Activated CD8-positive, alpha-beta T cell treated with anti-CD3 and anti-CD28 coated beads, Interleukin-2, amount 10 ng/mL, durations not matched to agents 7 days and 5 days (primary cell): ENCODE measurements at regions of chr20 and their contacts with region 1.

Region 1: DNA sequence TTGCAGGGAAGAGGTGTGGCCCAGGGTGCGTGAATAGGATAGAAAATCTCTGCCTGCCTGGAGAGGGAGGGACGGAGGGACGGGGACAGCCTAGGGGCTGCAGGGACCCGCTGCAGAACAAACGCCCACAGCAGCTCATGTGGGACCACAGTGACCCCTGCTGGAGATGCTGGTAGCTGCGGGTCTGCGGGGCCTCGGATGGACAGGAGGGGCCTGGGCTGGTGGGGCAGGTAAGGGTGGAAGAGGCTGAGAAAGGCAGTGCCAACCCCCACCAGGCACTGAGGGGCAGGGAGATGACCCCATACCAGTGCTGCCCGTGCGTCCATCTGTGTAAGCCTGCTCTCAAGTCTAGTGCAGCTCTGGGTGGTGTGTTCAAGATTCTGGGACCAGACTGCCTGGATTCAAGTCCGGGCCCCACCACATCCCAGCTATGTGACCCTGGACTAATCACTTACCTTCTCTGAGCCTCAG is 39.4 kb downstream of the KIAA1755 start:
- DNase-seq: peak; percentile 77
- ATAC-seq: peak; percentile 78
- H3K4me3 Mint-ChIP-seq: no peak overlapping the region
- H3K27ac Mint-ChIP-seq: no peak overlapping the region
- H3K4me1 Mint-ChIP-seq: peaks cover 3% of the 10 kb centered on the region
- H3K27me3 Mint-ChIP-seq: no peaks in the 10 kb centered on the region

Region 2: GRCh38 chr20:37986044-37986858 is 234.9 kb before region 1 on chr20:
- CTCF ChIA-PET with region 1: no interaction called
- POLR2A ChIA-PET with region 1: no interaction called
- DNase-seq: no peak
- ATAC-seq: no peak
- H3K4me3 Mint-ChIP-seq: no peak overlapping the region
- H3K27ac Mint-ChIP-seq: no peak overlapping the region
- H3K4me1 Mint-ChIP-seq: peaks cover 23% of the 10 kb centered on the region
- H3K27me3 Mint-ChIP-seq: no peaks in the 10 kb centered on the region

Region 3: GRCh38 chr20:38049800-38050199 is 171.4 kb before region 1 on chr20:
- CTCF ChIA-PET with region 1: interaction called, 14 read pairs
- POLR2A ChIA-PET with region 1: no interaction called
- DNase-seq: no peak
- ATAC-seq: no peak
- H3K4me3 Mint-ChIP-seq: no peak overlapping the region
- H3K27ac Mint-ChIP-seq: no peak overlapping the region
- H3K4me1 Mint-ChIP-seq: peaks cover 12% of the 10 kb centered on the region
- H3K27me3 Mint-ChIP-seq: no peaks in the 10 kb centered on the region

Region 4: GRCh38 chr20:38073307-38074071 is 147.7 kb before region 1 on chr20:
- CTCF ChIA-PET with region 1: interaction called, 69 read pairs
- POLR2A ChIA-PET with region 1: no interaction called
- DNase-seq: peak; percentile 43
- ATAC-seq: peak; percentile 70
- H3K4me3 Mint-ChIP-seq: no peak overlapping the region
- H3K27ac Mint-ChIP-seq: no peak overlapping the region
- H3K4me1 Mint-ChIP-seq: peaks cover 3% of the 10 kb centered on the region
- H3K27me3 Mint-ChIP-seq: no peaks in the 10 kb centered on the region

Region 5: GRCh38 chr20:38113401-38114325 is 107.5 kb before region 1 on chr20:
- CTCF ChIA-PET with region 1: interaction called, 39 read pairs
- POLR2A ChIA-PET with region 1: interaction called, 3 read pairs
- DNase-seq: peak; percentile 66
- ATAC-seq: peak; percentile 68
- H3K4me3 Mint-ChIP-seq: no peak overlapping the region
- H3K27ac Mint-ChIP-seq: peak overlapping the region; percentile 19
- H3K4me1 Mint-ChIP-seq: peaks cover 12% of the 10 kb centered on the region
- H3K27me3 Mint-ChIP-seq: peaks cover 17% of the 10 kb centered on the region